GM12878 (cell line): ENCODE measurements at regions of chr2 and their contacts with region 1.

Region 1: DNA sequence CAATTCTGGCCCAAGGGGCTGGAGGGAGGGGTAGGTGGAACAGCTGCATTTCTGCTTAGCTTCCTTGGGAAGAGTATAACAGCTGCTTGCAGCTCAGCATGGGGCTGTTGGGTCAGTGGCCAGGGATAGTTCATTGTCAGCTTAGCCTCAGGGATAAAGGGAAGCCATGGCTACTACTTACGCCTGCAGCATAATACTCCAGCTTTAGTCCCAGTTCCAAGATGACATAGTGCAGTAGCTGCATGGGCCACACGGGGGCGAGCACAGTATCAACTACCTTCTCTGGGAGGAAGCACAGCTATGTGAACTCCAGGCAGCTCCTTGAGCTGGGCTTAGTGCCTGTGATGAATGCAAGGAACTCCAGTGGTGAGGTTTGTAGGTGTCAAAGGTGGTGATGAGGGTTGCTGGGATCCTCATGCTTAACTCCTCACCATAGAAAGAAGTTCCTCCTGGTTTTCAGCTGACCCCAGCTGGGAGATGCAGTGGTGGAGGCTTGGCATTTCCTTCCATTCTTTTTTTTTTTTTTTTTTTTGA is 35.4 kb upstream of the RHOB start:
- DNase-seq: no peak
- ATAC-seq: peak; percentile 100
- H3K4me3 ChIP-seq: no peak overlapping the region
- H3K27ac ChIP-seq: no peak overlapping the region
- H3K4me1 ChIP-seq: no peaks in the 10 kb centered on the region
- H3K27me3 ChIP-seq: no peaks in the 10 kb centered on the region
- CTCF ChIP-seq: peak; percentile 84 to 94 (median 92)
- EP300 ChIP-seq: no peak
- POLR2A ChIP-seq: no peak
- RAD21 ChIP-seq: peak; percentile 80

Region 2: DNA sequence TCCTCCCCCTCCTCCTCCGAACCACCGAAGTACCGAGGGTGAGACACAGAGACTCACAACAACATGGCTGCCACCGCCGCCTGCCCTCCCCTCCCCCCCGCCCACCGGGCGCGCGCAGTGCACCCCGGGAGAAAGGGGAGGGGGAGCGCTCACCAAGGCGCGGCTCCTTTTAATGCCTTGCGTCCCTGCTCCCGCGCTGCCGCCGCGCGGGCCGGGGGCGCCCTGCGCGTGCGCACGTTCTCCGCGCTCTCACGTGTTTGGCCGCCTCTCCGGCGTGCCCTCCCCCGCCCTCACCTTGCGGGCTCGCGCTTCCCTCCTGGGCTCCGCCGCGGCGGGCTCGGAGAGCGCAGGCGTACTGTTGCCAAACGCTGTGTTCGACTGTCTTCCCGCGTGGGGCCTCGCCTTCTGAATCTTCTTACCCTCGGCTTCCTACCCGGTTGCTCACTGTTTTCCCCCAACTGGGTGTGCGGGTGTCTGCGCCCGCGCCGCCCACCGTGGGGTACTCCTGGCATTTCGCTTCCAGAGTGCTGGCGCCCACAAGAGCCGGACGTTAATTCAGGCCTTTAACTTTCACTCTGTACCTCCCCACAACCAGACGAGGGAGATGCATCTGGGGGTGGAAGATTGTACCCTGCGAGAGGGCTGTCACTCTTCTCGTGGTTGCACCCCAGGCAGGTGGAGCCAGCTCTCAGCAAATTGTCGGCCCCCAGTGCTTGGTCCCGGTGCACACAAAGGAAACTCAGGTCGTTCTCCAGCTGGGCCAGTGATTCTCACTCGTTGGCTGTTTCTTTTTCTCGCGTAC is 60.5 kb before region 1 on chr2 and contains the start of gene PUM2:
- CTCF ChIA-PET with region 1: interaction called, 4 read pairs
- POLR2A ChIA-PET with region 1: no interaction called
- RAD21 ChIA-PET with region 1: interaction called, 11 read pairs
- SMC1A ChIA-PET with region 1: interaction called, 5 read pairs
- in situ Hi-C with region 1: no loop called
- intact Hi-C with region 1: no loop called
- DNase-seq: peak; percentile 92
- ATAC-seq: peak; percentile 86
- H3K4me3 ChIP-seq: peak within 1 kb of the TSS; percentile 77
- H3K27ac ChIP-seq: peak within 1 kb of the TSS; percentile 98
- H3K4me1 ChIP-seq: peaks cover 15% of the 10 kb centered on the region
- H3K27me3 ChIP-seq: no peaks in the 10 kb centered on the region
- CTCF ChIP-seq: no peak
- EP300 ChIP-seq: no peak
- POLR2A ChIP-seq: peak; percentile 94
- RAD21 ChIP-seq: 0 out of 2 replicates have a peak, but pooled peaks have one; percentile 0
- polyA plus RNA-seq, gene PUM2: 14.5 to 17.8 TPM

Region 3: DNA sequence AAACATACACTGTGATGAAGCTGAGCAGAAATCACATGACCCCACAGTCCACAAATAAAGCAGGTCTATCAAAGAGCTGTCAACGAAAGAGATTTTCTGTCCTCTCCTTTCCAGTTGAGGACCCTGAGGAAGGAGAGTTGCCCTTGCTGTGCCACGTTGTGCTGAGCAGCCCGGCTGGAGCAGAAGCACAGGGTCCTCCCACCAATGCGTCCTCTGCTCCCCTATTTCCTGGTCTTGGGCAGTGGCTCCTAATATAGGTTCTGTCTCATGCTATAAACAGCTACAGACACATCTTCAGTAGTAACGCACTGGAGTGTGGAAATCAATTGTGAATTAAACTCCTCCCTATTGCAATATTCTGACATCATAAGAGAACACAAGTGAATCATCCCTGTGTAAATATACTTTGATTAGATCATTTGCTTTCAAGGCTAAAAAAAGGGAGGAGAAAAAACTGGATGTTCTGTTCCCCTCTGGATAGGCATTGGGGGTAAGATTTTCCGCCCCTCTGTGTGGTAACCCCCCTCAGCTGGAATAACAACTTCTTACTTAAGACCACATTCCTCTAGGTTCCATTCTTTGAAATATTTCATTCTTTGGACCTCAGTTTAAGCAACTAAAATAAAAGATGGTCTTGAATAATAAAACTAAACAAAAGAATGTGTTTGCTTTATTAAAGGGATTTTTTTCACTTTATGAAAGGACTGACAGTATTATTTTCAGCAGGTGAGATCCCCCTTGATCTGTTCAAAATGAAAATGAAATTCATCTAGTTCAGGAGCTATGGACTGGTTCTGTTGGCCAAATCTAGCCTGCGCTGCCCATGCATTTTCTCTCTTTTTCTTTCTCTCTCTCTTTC is 27.1 kb after region 1 on chr2:
- CTCF ChIA-PET with region 1: interaction called, 73 read pairs
- POLR2A ChIA-PET with region 1: no interaction called
- RAD21 ChIA-PET with region 1: interaction called, 17 read pairs
- SMC1A ChIA-PET with region 1: interaction called, 39 read pairs
- in situ Hi-C with region 1: no loop called
- intact Hi-C with region 1: no loop called
- DNase-seq: no peak
- ATAC-seq: no peak
- H3K4me3 ChIP-seq: no peak overlapping the region
- H3K27ac ChIP-seq: no peak overlapping the region
- H3K4me1 ChIP-seq: no peaks in the 10 kb centered on the region
- H3K27me3 ChIP-seq: peaks cover 2 to 3% of the 10 kb centered on the region in 2 experiments; a peak in 2 of 4 replicates
- CTCF ChIP-seq: no peak
- EP300 ChIP-seq: no peak
- POLR2A ChIP-seq: no peak
- RAD21 ChIP-seq: no peak

Region 4: GRCh38 chr2:20568501-20569463 is 157.4 kb after region 1 on chr2:
- CTCF ChIA-PET with region 1: no interaction called
- POLR2A ChIA-PET with region 1: no interaction called
- RAD21 ChIA-PET with region 1: no interaction called
- SMC1A ChIA-PET with region 1: no interaction called
- in situ Hi-C with region 1: no loop called
- intact Hi-C with region 1: no loop called
- DNase-seq: no peak
- ATAC-seq: no peak
- H3K4me3 ChIP-seq: no peak overlapping the region
- H3K27ac ChIP-seq: no peak overlapping the region
- H3K4me1 ChIP-seq: peaks cover 8% of the 10 kb centered on the region
- H3K27me3 ChIP-seq: no peaks in the 10 kb centered on the region; a peak in 1 of 4 replicates
- CTCF ChIP-seq: no peak
- EP300 ChIP-seq: no peak
- POLR2A ChIP-seq: no peak
- RAD21 ChIP-seq: no peak

Region 5: DNA sequence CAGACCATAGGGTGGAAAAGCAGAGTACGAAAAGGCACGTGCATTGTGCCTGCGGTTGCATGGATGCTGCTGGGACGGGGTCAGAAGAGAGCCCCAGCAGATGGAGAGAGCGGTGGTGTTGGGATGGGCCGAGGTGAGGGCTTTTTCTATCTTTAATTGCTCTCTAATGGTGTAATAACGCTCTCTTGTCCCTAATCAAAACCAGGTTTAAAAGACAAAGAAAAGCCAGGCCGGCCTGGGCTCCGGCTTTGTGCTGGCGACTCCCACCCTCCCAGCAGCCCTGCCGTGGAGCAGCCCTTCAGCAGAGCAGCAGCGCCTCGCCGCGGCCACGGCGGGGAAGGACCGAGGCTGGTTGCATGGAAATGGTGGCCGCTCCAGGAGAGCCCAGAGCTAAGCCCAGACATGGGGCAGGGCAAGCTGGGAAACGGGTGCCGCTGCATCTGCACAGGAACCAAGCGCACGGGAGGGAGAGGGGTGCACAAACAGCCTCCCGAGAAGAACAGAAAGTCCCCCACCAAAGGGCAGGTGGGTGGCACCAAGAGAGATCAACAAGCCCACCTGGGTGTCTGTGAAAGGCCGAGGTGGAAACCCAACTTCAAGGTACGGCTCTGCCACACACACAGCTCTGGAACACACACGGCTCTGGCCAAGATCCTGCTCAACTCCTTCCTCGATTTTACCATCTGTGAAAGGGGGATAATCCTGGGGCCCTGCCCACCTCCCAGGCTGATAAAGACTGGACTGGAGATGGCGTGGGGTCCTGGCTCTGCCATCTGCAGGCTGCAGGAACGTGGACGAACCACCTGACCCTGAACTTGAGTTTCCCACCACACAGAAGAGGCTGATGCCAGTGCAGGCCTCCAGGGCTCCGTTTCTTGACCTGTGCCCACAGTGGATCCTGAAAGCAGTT is 224.5 kb after region 1 on chr2:
- CTCF ChIA-PET with region 1: interaction called, 72 read pairs
- POLR2A ChIA-PET with region 1: no interaction called
- RAD21 ChIA-PET with region 1: interaction called, 18 read pairs
- SMC1A ChIA-PET with region 1: interaction called, 34 read pairs
- in situ Hi-C with region 1: no loop called
- intact Hi-C with region 1: no loop called
- DNase-seq: no peak
- ATAC-seq: peak; percentile 95
- H3K4me3 ChIP-seq: no peak overlapping the region
- H3K27ac ChIP-seq: no peak overlapping the region
- H3K4me1 ChIP-seq: peaks cover 17% of the 10 kb centered on the region
- H3K27me3 ChIP-seq: no peaks in the 10 kb centered on the region
- CTCF ChIP-seq: peak; percentile 81 to 93 (median 88)
- EP300 ChIP-seq: no peak
- POLR2A ChIP-seq: no peak
- RAD21 ChIP-seq: peak; percentile 98

Region 6: GRCh38 chr2:20650880-20651730 is 239.7 kb after region 1 on chr2 and contains the start of gene HS1BP3:
- CTCF ChIA-PET with region 1: interaction called, 35 read pairs
- POLR2A ChIA-PET with region 1: no interaction called
- RAD21 ChIA-PET with region 1: interaction called, 13 read pairs
- SMC1A ChIA-PET with region 1: interaction called, 3 read pairs
- in situ Hi-C with region 1: no loop called
- intact Hi-C with region 1: no loop called
- DNase-seq: peak; percentile 43
- ATAC-seq: peak; percentile 98
- H3K4me3 ChIP-seq: peak within 1 kb of the TSS; percentile 96
- H3K27ac ChIP-seq: no peak within 1 kb of the TSS; the same call in 1 of the 2 replicates
- H3K4me1 ChIP-seq: peaks cover 4% of the 10 kb centered on the region
- H3K27me3 ChIP-seq: peaks cover 0 to 1% of the 10 kb centered on the region in 2 experiments; a peak in 1 of 4 replicates
- CTCF ChIP-seq: peak; percentile 72 to 97 (median 91); a peak in 4 of 6 replicates
- EP300 ChIP-seq: no peak
- POLR2A ChIP-seq: peak; percentile 89
- RAD21 ChIP-seq: peak; percentile 68
- polyA plus RNA-seq, gene HS1BP3: 0.47 to 0.57 TPM